ENCODE measurements at regions of chr1 and their contacts with region 1.

Region 1: DNA sequence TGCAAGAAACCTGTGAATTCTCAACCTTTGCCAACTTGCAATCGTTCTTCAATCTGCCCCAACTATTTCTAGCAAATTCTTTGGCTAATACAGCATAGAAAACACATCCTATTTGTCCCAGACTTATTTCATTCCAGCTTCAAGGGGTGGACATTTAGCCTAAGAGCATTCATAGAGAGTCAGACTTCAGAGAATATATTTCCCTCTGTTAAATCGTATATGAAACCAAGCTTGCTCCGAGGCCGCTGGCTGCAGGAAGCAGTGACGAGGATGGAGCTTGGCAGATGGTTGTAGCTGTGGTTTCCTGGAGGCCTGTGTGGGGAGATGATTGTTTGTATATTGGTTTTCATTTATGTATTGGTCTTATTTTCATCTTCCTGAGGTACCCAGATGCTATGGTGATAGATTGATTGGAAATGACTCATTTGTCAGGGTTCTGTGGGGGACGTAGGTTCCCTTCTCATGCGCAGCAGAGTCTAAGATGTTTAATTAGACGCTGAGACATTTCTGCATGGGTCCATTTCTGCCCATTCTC is 26.1 kb downstream of the MAN1C1 start:
- DNase-seq: peak; percentile 55 to 90 (median 70)
- ATAC-seq: peak; percentile 89
- H3K4me3 ChIP-seq: peak overlapping the region; percentile 36
- H3K4me3 Mint-ChIP-seq: peak overlapping the region; percentile 82
- H3K27ac ChIP-seq: peak overlapping the region; percentile 68 to 72
- H3K27ac Mint-ChIP-seq: peak overlapping the region; percentile 89
- H3K4me1 ChIP-seq: peaks cover 60% of the 10 kb centered on the region
- H3K4me1 Mint-ChIP-seq: peaks cover 90% of the 10 kb centered on the region
- H3K27me3 ChIP-seq: no peaks in the 10 kb centered on the region
- H3K27me3 Mint-ChIP-seq: no peaks in the 10 kb centered on the region
- CTCF ChIP-seq: no peak

Region 2: DNA sequence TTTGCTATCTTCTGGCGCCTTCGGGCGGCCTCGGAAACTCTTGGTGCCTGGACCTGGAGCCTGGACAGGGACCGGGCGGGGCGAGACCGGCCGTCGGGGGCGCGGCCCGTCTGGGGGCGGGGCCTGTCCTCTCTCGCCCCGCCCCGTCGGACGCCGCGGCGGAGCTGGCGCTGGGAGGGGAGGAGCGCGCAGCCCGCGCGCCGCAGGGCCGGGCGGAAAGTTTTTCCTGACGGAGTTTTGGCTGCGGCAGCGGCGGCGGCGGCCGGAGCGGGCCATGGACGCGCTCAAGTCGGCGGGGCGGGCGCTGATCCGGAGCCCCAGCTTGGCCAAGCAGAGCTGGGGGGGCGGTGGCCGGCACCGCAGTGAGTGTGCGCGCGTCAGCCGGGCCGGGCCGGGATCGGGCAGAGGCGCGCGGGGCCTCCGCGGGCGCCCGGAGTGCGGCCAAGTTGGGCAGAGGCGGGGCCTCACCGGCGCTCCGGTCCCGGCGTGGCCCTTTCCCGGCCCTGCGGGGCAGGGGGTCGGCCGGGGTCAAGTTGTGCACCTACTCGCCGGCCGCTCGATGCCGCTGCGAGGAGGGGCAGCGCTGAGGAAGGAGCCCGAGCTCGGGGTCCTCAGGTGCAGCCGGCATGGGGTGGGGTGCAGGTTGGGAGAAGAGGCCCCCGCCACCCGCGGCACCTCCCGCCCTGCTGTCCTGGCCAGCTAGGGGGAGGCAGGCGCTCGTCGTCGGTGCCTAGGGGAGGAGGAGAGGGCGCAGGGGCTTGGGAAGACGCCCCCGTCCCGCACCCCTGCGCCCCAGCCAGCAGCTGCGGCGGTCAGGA is 99.0 kb before region 1 on chr1 and contains the start of gene LDLRAP1:
- CTCF ChIA-PET with region 1: no interaction called
- POLR2A ChIA-PET with region 1: no interaction called
- intact Hi-C with region 1: no loop called
- DNase-seq: peak in 12 of 14 experiments; percentile 28 to 81 (median 56)
- ATAC-seq: peak; percentile 71
- H3K4me3 ChIP-seq: peak within 1 kb of the TSS; percentile 90
- H3K4me3 Mint-ChIP-seq: peak within 1 kb of the TSS; percentile 96
- H3K27ac ChIP-seq: peak within 1 kb of the TSS; percentile 55 to 60
- H3K27ac Mint-ChIP-seq: peak within 1 kb of the TSS; percentile 87
- H3K4me1 ChIP-seq: peaks cover 50% of the 10 kb centered on the region
- H3K4me1 Mint-ChIP-seq: peaks cover 47% of the 10 kb centered on the region
- H3K27me3 ChIP-seq: no peaks in the 10 kb centered on the region
- H3K27me3 Mint-ChIP-seq: no peaks in the 10 kb centered on the region
- CTCF ChIP-seq: no peak
- total RNA-seq, gene LDLRAP1: 70.5 to 73.5 TPM

Region 3: GRCh38 chr1:25624156-25624555 is 18.5 kb before region 1 on chr1:
- CTCF ChIA-PET with region 1: interaction called, 28 read pairs
- POLR2A ChIA-PET with region 1: interaction called, 59 read pairs
- intact Hi-C with region 1: loop called (anchors 1 kb)
- DNase-seq: peak in 4 of 14 experiments; percentile 23 to 61 (median 50)
- ATAC-seq: no peak
- H3K4me3 ChIP-seq: no peak overlapping the region
- H3K4me3 Mint-ChIP-seq: peak overlapping the region; percentile 100
- H3K27ac ChIP-seq: no peak overlapping the region
- H3K27ac Mint-ChIP-seq: peak overlapping the region; percentile 93
- H3K4me1 ChIP-seq: peaks cover 60% of the 10 kb centered on the region
- H3K4me1 Mint-ChIP-seq: peaks cover 93% of the 10 kb centered on the region
- H3K27me3 ChIP-seq: no peaks in the 10 kb centered on the region
- H3K27me3 Mint-ChIP-seq: no peaks in the 10 kb centered on the region
- CTCF ChIP-seq: no peak

Region 4: DNA sequence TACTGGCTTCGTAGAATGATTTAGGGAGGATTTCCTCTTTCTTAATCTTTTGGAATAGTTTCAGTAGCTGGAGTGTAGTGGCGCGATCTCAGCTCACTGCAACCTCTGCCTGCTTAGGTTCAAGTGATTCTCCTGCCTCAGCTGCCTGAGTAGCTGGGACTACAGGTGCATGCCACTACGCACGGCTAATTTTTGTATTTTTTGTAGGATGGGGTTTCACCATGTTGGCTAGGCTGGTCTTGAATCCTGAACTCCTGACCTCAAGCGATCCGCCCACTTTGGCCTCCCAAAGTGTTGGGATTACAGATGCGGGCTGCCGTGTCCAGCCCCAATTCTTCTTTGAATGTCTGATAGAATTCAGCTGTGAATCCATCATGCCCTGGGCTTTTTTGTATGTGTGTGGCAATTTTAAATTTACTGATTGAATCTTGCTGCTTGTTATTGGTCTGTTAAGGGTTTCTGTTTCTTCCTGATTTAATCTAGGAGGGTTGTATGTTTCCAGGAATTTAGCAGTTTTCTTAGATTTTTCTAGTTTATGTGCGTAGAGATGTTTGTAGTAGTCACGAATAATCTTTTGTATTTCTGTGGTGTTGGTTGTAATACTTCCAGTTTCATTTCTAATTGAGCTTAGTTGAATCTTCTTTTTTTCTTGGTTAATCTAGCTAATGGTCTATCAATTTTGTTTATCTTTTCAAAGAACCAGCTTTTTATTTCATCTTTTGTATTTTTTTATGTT is 10.7 kb before region 1 on chr1:
- CTCF ChIA-PET with region 1: interaction called, 4 read pairs
- POLR2A ChIA-PET with region 1: interaction called, 33 read pairs
- intact Hi-C with region 1: loop called in 1 of 2 experiments (anchors 1 kb)
- DNase-seq: peak in 1 of 14 experiments; percentile 38
- ATAC-seq: peak; percentile 16
- H3K4me3 ChIP-seq: peak overlapping the region; percentile 46
- H3K4me3 Mint-ChIP-seq: peak overlapping the region; percentile 87
- H3K27ac ChIP-seq: peak overlapping the region; percentile 57 to 63
- H3K27ac Mint-ChIP-seq: peak overlapping the region; percentile 88
- H3K4me1 ChIP-seq: peaks cover 26% of the 10 kb centered on the region
- H3K4me1 Mint-ChIP-seq: peaks cover 86% of the 10 kb centered on the region
- H3K27me3 ChIP-seq: no peaks in the 10 kb centered on the region
- H3K27me3 Mint-ChIP-seq: no peaks in the 10 kb centered on the region
- CTCF ChIP-seq: no peak

Region 5: DNA sequence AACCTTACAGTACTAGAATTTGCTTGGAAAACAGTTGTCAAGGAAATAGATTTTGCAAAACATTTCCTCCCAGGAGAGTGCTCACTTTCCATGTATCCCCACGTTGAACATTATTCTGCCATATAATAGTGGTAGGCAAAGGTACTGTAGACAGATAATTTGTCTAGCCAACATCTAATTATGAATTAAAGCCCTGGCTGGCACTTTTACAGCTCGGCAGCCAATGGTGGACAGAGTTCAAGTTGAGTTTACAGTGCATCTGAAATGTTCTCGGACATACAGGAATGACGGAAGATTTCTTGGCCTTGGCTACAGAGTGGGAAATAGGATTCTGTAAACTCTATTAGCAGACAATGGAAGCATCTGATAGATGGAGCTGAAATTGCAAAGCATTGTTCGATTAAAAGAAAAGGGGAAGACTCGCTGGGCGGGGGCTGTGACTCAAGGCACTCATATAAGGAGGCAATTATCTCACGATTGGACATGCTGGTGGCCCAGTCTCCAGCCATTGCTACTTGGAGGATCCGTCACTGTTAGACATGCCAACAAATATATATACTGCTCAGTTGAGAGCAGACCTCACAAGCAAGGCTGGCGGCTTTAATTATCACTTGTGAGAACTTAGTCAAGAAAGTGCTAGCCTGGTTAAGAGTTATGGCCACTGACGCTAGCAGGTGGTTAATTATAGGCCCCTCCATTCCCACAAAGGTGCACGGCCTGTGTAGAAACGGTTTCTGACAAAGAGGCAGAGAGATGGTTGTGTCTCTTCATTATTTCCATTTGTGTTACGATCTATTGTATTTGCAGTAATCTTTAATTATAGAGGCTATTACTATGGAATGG is 21.9 kb after region 1 on chr1:
- CTCF ChIA-PET with region 1: no interaction called
- POLR2A ChIA-PET with region 1: interaction called, 22 read pairs
- intact Hi-C with region 1: no loop called
- DNase-seq: no peak
- ATAC-seq: no peak
- H3K4me3 ChIP-seq: no peak overlapping the region
- H3K4me3 Mint-ChIP-seq: no peak overlapping the region
- H3K27ac ChIP-seq: no peak overlapping the region
- H3K27ac Mint-ChIP-seq: peak overlapping the region; percentile 96
- H3K4me1 ChIP-seq: peaks cover 30% of the 10 kb centered on the region
- H3K4me1 Mint-ChIP-seq: peaks cover 87% of the 10 kb centered on the region
- H3K27me3 ChIP-seq: no peaks in the 10 kb centered on the region
- H3K27me3 Mint-ChIP-seq: no peaks in the 10 kb centered on the region
- CTCF ChIP-seq: no peak

Region 6: GRCh38 chr1:25675729-25676476 is 33.3 kb after region 1 on chr1:
- CTCF ChIA-PET with region 1: no interaction called
- POLR2A ChIA-PET with region 1: interaction called, 40 read pairs
- intact Hi-C with region 1: loop called in 1 of 2 experiments (anchors 1 kb)
- DNase-seq: peak; percentile 41 to 90 (median 66)
- ATAC-seq: peak; percentile 80
- H3K4me3 ChIP-seq: peak overlapping the region; percentile 37
- H3K4me3 Mint-ChIP-seq: peak overlapping the region; percentile 83
- H3K27ac ChIP-seq: peak overlapping the region; percentile 53 to 63
- H3K27ac Mint-ChIP-seq: peak overlapping the region; percentile 96
- H3K4me1 ChIP-seq: peaks cover 63% of the 10 kb centered on the region
- H3K4me1 Mint-ChIP-seq: peaks cover 94% of the 10 kb centered on the region
- H3K27me3 ChIP-seq: no peaks in the 10 kb centered on the region
- H3K27me3 Mint-ChIP-seq: no peaks in the 10 kb centered on the region
- CTCF ChIP-seq: no peak

Region 7: DNA sequence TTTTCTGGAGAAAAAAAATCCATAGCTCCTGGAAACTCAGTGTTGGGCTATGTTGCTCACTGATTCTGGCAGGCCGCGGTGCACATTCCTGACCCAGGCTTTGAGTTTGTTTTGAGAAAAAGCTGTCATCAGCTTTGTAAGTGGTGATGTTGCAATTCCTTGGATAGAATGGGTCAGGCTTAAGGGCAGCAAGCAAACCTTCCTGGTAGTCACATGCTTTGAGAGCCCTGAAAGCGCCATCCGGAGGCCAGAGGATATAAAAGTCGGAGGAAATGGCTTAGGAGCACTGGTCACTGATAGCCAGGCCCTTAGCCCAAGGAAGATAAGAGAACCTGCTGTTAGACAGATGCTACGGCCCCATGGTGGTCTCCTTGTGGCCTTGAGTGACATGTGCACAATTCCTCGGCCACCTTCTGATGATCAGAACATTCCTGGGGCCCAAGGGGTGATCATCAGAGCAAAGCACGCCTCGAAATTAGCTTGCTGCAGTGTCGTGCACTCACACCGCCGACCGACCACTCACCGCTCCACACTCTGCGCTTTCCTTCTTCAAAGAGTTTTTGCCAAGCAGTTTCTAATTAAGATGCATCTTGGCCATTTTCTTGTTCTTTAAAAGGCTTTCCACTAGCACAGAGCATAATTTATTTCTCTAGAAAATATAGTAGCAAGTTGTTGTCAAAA is 52.6 kb after region 1 on chr1:
- CTCF ChIA-PET with region 1: no interaction called
- POLR2A ChIA-PET with region 1: interaction called, 10 read pairs
- intact Hi-C with region 1: no loop called
- DNase-seq: no peak
- ATAC-seq: no peak
- H3K4me3 ChIP-seq: no peak overlapping the region
- H3K4me3 Mint-ChIP-seq: no peak overlapping the region
- H3K27ac ChIP-seq: peak overlapping the region in 1 of 2 donors; percentile 39
- H3K27ac Mint-ChIP-seq: peak overlapping the region; percentile 74
- H3K4me1 ChIP-seq: peaks cover 48% of the 10 kb centered on the region
- H3K4me1 Mint-ChIP-seq: peaks cover 73% of the 10 kb centered on the region
- H3K27me3 ChIP-seq: no peaks in the 10 kb centered on the region
- H3K27me3 Mint-ChIP-seq: no peaks in the 10 kb centered on the region
- CTCF ChIP-seq: no peak